Psoas muscle (tissue), 8 donors: ENCODE measurements at regions of chr3 and their contacts with region 1.

Region 1: DNA sequence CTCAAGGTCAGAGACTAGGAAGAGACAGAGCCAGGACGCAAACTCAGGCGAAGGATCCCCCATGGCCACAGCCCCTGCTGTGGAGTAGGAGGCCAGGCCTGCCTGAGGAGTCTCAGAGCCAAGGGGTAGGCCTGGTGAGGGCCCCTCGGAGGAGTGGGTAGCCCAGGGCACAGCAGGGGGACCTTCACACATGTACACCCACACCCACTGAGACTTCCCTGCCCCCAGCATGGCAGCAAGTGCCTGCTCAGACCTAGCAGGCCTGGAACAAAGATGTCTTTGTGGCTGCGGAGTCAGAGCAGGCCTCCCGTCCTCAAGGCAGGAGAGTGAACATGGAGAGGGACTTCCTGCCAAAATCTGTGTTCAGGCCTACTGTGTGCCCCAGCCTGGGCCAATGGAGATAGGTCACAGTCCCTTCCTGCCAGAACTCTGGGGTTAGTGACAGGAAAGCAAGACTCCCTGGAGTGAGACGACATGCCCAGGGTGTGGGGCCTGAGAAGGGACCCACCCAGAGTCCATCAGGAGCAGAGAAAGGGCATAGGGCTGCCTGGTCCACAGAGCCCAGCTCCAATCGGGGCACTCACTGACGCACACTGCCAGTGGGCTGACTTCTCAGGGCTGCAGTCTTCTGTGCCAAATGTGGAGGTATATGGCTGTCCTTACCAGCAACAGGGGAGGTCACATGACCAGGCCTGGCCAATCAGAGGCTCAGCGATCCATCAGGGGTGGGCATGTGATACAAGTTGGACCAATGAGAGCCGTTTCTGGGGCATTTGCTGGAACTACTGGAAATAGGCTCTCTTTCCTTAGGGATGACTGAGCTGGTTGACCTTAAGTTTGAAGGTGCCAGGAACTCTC is 2.3 kb downstream of the GRIP2 start:
- DNase-seq: peak; percentile 76 to 91
- ATAC-seq: peak; percentile 62 to 70 (median 68)
- H3K4me3 ChIP-seq: peak overlapping the region; percentile 73
- H3K27ac ChIP-seq: peak overlapping the region; percentile 83
- H3K4me1 ChIP-seq: peaks cover 74% of the 10 kb centered on the region
- H3K27me3 ChIP-seq: no peaks in the 10 kb centered on the region
- CTCF ChIP-seq: no peak

Region 2: DNA sequence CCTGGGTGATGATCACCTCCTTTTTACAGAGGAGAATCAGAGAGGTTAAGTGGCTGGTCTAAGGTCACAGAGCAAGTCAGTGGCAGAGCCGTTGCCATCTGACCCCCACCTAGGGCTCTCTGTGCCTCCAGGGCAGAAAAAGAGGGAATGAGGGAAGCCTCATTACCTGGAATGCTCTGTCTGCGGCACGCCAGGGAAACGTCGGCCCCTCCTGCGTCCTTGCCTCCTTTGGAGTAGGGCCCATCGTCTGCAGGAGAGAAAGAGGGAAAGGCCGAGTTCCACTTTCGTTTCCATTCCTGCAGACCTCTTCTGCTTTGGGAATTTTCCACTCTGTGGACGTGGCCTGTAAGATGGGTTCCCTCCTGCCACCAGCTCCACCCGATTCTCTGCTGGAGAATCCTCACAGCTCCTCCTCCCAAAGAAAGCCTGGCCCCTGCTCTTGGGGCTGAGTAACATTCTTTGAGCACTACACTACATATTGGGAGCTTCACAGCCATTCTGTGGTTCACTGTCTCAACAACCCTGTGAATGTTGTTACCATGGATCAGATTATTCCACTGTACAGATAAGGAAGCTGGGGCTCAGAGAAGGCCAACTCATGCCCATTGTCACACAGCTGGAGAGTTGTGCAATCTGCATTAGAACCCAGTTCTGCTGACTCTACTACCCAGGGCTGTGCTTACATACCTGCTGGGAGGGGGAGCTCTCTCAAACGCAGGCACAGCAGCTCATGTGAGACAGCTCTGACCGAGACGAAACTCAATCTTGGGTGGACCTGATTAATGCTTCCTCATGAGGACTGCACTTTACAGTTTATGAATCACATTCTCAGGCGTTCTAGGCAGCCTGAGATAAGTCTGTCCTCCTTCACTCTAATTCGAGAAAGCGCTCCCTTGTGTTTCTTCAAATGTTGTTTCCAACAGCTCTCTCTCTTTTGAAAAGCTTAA is 11.9 kb before region 1 on chr3:
- intact Hi-C with region 1: loop called (anchors 2 kb)
- DNase-seq: peak in 1 of 2 donors; percentile 60
- ATAC-seq: peak; percentile 25 to 55 (median 28)
- H3K4me3 ChIP-seq: peak overlapping the region; percentile 35
- H3K27ac ChIP-seq: peak overlapping the region; percentile 94
- H3K4me1 ChIP-seq: peaks cover 72% of the 10 kb centered on the region
- H3K27me3 ChIP-seq: no peaks in the 10 kb centered on the region
- CTCF ChIP-seq: no peak

Region 3: GRCh38 chr3:14660907-14661306 is 123.1 kb after region 1 on chr3:
- intact Hi-C with region 1: no loop called
- DNase-seq: no peak
- ATAC-seq: no peak
- H3K4me3 ChIP-seq: no peak overlapping the region
- H3K27ac ChIP-seq: no peak overlapping the region
- H3K4me1 ChIP-seq: no peaks in the 10 kb centered on the region
- H3K27me3 ChIP-seq: no peaks in the 10 kb centered on the region
- CTCF ChIP-seq: no peak